Left cardiac atrium (tissue), 4 donors: ENCODE measurements at regions of chr1 and their contacts with region 1.

Region 1: GRCh38 chr1:174217787-174218574 is 58.7 kb downstream of the RABGAP1L start:
- DNase-seq: no peak
- ATAC-seq: peak; percentile 51 to 61

Region 2: GRCh38 chr1:174097426-174097825 is 120.6 kb before region 1 on chr1:
- intact Hi-C with region 1: loop called in 1 of 2 experiments (anchors 5 kb)
- DNase-seq: no peak
- ATAC-seq: no peak